ENCODE measurements at regions of chr2 and their contacts with region 1.

Region 1: GRCh38 chr2:106104332-106105062 is 89.6 kb downstream of the UXS1 start:
- DNase-seq: peak; percentile 77
- ATAC-seq: peak; percentile 69
- H3K4me3 Mint-ChIP-seq: no peak overlapping the region
- H3K27ac Mint-ChIP-seq: no peak overlapping the region
- H3K4me1 Mint-ChIP-seq: peaks cover 2% of the 10 kb centered on the region
- H3K27me3 Mint-ChIP-seq: no peaks in the 10 kb centered on the region

Region 2: DNA sequence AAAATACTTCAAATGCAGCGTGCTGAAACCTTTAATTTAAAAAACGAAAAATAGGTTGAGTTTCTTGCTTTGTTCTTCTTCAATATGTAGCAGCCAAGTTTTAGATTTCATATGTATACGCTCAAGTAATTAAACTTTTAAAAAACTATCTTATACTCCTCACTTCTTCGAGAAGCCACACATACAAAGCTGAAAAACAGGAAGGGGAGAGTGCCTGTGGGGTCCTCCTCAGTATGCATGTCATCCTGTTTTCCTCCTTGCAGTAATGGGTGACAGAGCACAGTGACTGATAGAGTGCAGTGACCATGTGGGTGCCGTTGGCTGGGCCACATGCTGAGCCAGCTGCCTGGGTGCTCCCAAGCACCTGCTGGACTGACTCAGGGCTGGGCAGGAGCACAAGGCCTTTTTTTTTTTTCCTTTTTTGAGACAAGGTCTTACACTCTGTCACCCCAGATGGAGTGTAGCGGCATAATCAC is 56.3 kb after region 1 on chr2:
- CTCF ChIA-PET with region 1: interaction called, 5 read pairs
- POLR2A ChIA-PET with region 1: interaction called, 3 read pairs
- intact Hi-C with region 1: loop called in 1 of 2 experiments (anchors 5 kb)
- DNase-seq: peak; percentile 70
- ATAC-seq: peak; percentile 71
- H3K4me3 Mint-ChIP-seq: peak overlapping the region; percentile 70
- H3K27ac Mint-ChIP-seq: peak overlapping the region; percentile 91
- H3K4me1 Mint-ChIP-seq: peaks cover 88% of the 10 kb centered on the region
- H3K27me3 Mint-ChIP-seq: no peaks in the 10 kb centered on the region

Region 3: DNA sequence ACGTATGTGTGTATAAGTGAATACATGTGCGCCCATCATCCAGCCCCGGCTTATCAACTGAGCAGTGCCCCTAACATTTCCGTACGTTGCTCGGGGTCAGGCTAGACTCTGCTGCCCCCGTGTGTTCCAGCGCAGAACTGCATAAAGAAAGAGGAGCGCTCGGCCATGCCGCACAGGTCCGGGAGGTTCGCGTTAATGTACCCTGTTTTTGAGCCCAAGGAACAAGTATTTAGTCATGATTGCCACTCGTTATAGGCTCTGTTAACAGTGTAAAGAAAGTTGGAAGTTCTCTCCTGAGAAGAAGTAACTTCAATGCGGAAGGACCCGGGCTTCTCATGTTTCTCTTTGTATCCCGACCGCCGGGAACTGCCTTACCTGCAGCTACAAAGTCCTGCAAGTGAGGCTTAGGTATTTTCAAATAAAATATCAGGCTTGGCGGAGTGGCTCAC is 438.3 kb after region 1 on chr2:
- CTCF ChIA-PET with region 1: interaction called, 3 read pairs
- POLR2A ChIA-PET with region 1: no interaction called
- intact Hi-C with region 1: loop called (anchors 1 to 2 kb)
- DNase-seq: peak; percentile 86
- ATAC-seq: peak; percentile 96
- H3K4me3 Mint-ChIP-seq: peak overlapping the region; percentile 34
- H3K27ac Mint-ChIP-seq: no peak overlapping the region
- H3K4me1 Mint-ChIP-seq: peaks cover 3% of the 10 kb centered on the region
- H3K27me3 Mint-ChIP-seq: peaks cover 13% of the 10 kb centered on the region